ENCODE measurements at regions of chr17 and their contacts with region 1.

Region 1: DNA sequence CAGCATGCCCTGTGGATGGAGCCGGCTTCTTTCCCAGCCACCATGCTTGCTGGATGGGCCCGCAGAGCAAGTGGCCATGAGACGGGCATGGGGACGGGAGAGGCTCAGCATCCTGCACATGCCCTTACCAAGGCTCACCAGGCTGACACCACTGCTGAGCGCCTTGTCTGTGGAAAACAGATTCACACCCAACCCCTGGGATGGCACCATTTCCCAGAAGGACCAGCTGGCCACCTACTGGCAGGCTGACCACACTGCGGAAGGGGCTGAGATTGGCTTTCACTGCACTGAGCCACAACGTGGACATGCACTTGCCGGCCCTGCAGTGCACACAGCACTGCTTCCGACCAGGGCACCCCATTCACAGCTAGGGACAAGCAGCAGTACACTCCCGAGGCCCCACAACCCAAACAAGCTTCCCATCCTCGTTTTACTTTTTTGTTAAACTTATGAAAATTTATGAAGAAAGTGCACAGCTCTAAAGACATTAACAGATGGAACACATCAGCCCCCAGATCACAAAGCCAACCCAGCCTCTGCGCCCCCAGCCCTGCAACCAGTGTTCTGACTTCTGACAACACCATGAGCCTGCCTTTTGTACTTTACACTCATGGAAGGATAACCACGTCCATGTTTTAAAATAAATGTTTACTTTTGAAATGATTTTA is 13.9 kb upstream of the KRTAP17-1 start:
- DNase-seq: peak in 1 of 2 experiments; percentile 64
- H3K4me3 ChIP-seq: no peak overlapping the region
- H3K4me1 ChIP-seq: no peaks in the 10 kb centered on the region
- H3K27me3 ChIP-seq: no peaks in the 10 kb centered on the region

Region 2: DNA sequence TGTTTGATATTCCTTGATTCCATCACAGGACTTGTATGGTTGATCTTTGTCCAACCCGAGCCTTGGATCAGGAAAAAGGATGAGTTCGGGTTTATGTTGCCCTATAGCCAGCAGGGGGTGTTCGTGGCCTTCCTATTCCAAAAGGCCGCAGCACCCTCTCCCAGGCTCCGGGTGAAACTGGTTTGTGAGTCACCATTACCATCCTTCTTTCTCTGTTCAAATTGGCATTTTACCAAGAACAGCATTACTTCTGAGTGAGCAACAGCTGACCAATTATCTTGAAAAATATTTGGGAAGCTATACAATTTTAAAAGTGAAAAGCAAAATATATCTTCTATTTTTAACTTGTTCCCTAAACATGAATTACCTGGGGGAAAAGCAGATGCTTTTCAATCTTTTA is 420.1 kb before region 1 on chr17:
- in situ Hi-C with region 1: loop called (anchors 25 kb)
- DNase-seq: peak; percentile 68 to 80
- H3K4me3 ChIP-seq: no peak overlapping the region
- H3K4me1 ChIP-seq: no peaks in the 10 kb centered on the region
- H3K27me3 ChIP-seq: peaks cover 12% of the 10 kb centered on the region

Measured in HAP-1 (cell line).